ENCODE measurements at regions of chr7 and their contacts with region 1.

Region 1: GRCh38 chr7:140175221-140176121 is 1.3 kb downstream of the KDM7A start:
- DNase-seq: peak; percentile 93
- ATAC-seq: peak; percentile 71
- H3K4me3 ChIP-seq: peak overlapping the region; percentile 81 to 83
- H3K27ac ChIP-seq: peak overlapping the region; percentile 45; the same call in 1 of the 2 replicates
- H3K4me1 ChIP-seq: peaks cover 10% of the 10 kb centered on the region
- H3K27me3 ChIP-seq: no peaks in the 10 kb centered on the region
- CTCF ChIP-seq: peak; percentile 87

Region 2: DNA sequence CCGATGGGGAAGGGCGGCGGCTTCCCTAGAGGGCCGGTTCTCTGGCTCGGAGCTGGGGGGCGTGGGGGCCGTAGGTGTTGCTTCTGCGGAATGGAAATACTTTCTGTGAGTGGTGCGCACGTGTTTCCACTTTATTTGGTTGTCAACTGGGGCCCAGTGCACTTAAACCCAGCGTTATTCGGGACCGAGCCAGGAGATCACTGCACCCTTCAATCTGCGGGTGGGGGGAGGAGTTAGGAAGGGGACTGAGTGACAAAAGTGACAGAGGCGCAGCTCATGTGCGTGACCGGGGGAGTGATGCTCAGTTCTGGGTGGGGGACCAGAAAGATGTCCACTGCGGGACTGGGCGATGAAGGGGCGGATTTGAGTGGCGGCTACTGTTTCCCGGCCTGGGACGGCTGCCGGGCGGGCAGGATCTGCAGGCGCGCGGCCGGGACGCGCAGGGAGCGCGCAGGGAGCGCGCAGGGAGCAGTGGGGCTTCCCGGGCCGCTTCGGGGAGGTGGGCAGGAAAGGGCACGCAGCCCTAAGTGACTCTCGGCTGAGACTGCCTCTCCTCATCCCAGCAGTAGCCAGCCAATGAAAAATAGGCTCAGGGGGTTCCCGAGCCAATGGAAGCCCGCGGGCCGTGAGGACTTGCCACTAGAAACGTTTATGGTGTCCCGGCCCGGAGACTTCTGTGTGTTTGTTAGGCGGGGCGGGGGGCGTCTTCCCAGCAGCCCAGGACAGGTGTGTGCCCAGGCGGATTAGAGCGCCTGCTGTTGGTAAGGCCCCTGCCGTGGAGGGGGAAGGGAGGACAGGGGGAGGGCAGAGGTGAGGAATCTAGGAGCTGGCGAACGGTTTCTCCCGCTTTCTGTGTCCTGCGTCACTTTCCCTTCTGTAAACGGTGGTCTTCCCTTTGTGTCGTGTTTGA is 55.6 kb after region 1 on chr7:
- CTCF ChIA-PET with region 1: no interaction called
- POLR2A ChIA-PET with region 1: interaction called, 16 read pairs
- in situ Hi-C with region 1: no loop called
- intact Hi-C with region 1: no loop called
- DNase-seq: no peak
- ATAC-seq: peak; percentile 81
- H3K4me3 ChIP-seq: peak overlapping the region; percentile 52 to 68
- H3K27ac ChIP-seq: no peak overlapping the region
- H3K4me1 ChIP-seq: no peaks in the 10 kb centered on the region
- H3K27me3 ChIP-seq: peaks cover 2% of the 10 kb centered on the region
- CTCF ChIP-seq: no peak

Region 3: GRCh38 chr7:140326116-140326928 is 150.9 kb after region 1 on chr7:
- CTCF ChIA-PET with region 1: interaction called, 3 read pairs
- POLR2A ChIA-PET with region 1: no interaction called
- in situ Hi-C with region 1: no loop called
- intact Hi-C with region 1: loop called (anchors 2 kb)
- DNase-seq: peak; percentile 52
- ATAC-seq: peak; percentile 95
- H3K4me3 ChIP-seq: peak overlapping the region in 1 of 2 experiments; percentile 24; a peak in 1 of 4 replicates
- H3K27ac ChIP-seq: no peak overlapping the region
- H3K4me1 ChIP-seq: no peaks in the 10 kb centered on the region; the same call in 1 of the 2 replicates
- H3K27me3 ChIP-seq: no peaks in the 10 kb centered on the region
- CTCF ChIP-seq: peak; percentile 87